Common myeloid progenitor, CD34-positive (primary cell): ENCODE measurements at regions of chr6 and their contacts with region 1.

Region 1: DNA sequence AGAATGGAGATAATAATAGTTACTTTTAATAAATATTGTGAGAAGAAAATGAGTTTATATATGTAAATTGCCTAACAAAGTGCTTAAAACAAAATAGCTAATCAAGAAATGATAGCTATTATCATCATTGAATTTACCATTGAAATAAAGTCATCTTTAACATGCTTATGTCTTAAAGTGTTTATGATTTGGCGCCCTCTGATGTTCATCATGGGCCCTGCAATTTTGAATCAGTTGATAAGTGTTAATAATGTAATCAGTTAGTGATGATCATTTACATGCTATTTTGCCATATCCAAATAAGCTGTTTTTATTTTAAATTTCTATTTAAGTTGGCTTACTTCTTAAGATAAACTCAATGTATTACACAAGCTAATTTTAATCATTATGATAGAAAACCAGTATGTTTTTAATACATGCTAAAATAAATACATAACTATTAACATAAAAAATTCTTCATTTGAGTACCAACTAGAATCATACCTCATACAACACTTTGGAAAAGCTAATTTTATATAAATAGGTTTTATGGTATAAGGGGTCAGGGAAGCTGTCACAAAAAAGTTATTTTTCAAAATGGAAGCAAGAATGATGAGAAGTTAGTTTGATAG is 39.2 kb upstream of the TPD52L1 start:
- DNase-seq: peak; percentile 61 to 72 (median 65)
- H3K4me3 ChIP-seq: no peak overlapping the region
- H3K27ac ChIP-seq: no peak overlapping the region
- H3K4me1 ChIP-seq: no peaks in the 10 kb centered on the region
- H3K27me3 ChIP-seq: no peaks in the 10 kb centered on the region

Region 2: GRCh38 chr6:124870611-124871459 is 243.5 kb before region 1 on chr6:
- CTCF ChIA-PET with region 1: interaction called, 81 read pairs
- POLR2A ChIA-PET with region 1: no interaction called
- DNase-seq: peak in 2 of 3 donors; percentile 35 to 51
- H3K4me3 ChIP-seq: no peak overlapping the region
- H3K27ac ChIP-seq: no peak overlapping the region
- H3K4me1 ChIP-seq: no peaks in the 10 kb centered on the region
- H3K27me3 ChIP-seq: no peaks in the 10 kb centered on the region

Region 3: GRCh38 chr6:125099211-125100073 is 14.9 kb before region 1 on chr6:
- CTCF ChIA-PET with region 1: interaction called, 15 read pairs
- POLR2A ChIA-PET with region 1: no interaction called
- DNase-seq: peak; percentile 53 to 86 (median 78)
- H3K4me3 ChIP-seq: peak overlapping the region; percentile 38 to 88 (median 71)
- H3K27ac ChIP-seq: no peak overlapping the region
- H3K4me1 ChIP-seq: peaks cover 0 to 5% (median 3%) of the 10 kb centered on the region in 4 experiments
- H3K27me3 ChIP-seq: peaks cover 0 to 5% (median 3%) of the 10 kb centered on the region in 5 experiments

Region 4: DNA sequence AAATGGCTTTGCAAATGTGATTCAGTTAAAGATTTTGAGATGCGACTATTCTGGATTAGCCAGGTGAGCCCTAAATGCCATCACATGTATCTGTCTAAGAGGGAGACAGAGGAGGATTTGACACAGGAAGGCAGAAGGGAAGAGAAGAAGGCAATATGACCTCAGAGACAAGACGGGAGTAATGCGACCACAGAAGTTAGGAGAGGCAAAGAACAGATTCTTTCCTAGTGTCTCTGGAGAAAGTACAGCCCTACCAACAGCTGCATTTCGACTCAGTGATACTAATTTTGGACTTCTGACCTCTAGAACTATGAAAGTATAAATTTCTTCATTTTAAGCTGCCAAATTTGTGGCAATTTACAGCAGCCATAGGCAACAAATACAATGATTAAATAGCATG is 15.0 kb after region 1 on chr6:
- CTCF ChIA-PET with region 1: interaction called, 10 read pairs
- POLR2A ChIA-PET with region 1: no interaction called
- DNase-seq: no peak
- H3K4me3 ChIP-seq: no peak overlapping the region
- H3K27ac ChIP-seq: no peak overlapping the region
- H3K4me1 ChIP-seq: no peaks in the 10 kb centered on the region
- H3K27me3 ChIP-seq: no peaks in the 10 kb centered on the region